Mucosa of descending colon (tissue), 3 donors: ENCODE measurements at regions of chr2 and their contacts with region 1.

Region 1: DNA sequence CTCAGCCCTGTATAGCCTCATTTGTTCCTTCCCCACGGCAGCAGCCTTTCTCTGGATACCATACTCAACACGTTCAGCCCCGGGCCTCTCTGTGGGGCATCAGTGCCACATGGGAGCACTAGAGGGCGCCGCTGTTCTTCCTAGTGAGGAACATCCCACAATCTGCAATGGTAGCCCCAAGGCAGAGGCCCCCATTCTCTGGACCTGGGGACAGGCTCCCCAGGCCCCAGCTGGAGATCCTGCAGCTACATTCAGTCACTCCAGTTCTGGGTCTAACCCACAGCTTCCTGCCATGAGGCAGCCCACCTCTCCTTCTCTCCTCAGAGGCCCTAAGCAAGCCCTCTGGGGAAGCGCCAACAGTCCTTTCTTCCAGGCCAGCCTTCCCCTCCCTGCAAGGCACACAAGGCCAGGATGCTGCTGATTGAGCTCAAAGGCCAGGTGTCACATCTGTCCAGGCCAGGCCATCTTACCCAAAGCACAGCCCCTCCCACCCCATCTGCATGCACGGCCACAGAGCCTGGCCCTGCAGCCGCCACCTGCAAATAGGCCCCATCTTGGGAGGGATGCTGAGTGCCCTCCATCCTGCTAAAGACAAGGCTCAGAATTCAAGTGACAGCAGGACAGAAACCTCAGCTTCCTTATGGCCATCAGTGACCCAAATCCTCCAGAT is 14.3 kb upstream of the SFXN5 start:
- DNase-seq: peak; percentile 81 to 95 (median 88)
- ATAC-seq: peak; percentile 83
- H3K4me3 ChIP-seq: no peak overlapping the region
- H3K4me1 ChIP-seq: no peaks in the 10 kb centered on the region
- CTCF ChIP-seq: peak; percentile 91

Region 2: GRCh38 chr2:73156539-73157124 is 70.8 kb after region 1 on chr2:
- intact Hi-C with region 1: loop called (anchors 2 kb)
- DNase-seq: peak; percentile 60 to 69 (median 60)
- ATAC-seq: peak; percentile 71
- H3K4me3 ChIP-seq: no peak overlapping the region
- H3K4me1 ChIP-seq: peaks cover 2% of the 10 kb centered on the region
- CTCF ChIP-seq: peak; percentile 35